H1 (cell line): ENCODE measurements at regions of chr3 and their contacts with region 1.

Region 1: DNA sequence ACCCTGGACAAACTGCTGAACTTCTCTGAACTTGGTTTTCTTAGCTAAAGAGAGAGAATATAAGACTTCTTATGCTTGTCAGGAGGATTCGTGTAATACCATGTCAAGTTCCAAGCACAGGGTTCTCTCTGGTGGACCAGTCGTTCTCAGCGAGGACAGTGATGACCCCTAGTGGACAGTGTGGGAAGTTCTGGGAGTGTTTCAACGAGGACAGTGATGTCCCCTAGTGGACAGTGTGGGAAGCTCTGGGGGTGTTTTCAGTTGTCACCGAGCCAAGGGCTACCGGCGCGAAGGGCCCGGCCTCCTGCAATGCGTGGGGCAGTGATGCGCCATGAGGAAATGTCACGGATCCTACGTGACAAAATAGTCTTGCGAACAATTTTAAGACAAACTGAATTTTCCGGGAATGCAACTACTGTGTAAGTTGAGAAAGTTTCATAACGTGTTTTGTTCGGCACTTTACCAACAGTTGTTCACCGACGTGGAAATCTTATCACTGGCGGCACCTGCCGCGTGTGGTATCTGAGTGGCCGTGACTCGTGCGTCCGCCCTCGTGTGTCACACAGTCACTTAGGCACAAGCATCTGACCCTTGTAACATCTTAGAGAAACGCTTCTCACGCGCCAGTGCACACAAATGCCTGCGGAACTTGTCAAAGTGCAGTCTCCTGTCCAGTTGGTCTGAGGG is 39.3 kb upstream of the MUC4 start:
- DNase-seq: peak; percentile 70 to 92
- H3K4me3 ChIP-seq: no peak overlapping the region
- H3K27ac ChIP-seq: no peak overlapping the region
- H3K4me1 ChIP-seq: no peaks in the 10 kb centered on the region; a peak in 1 of 7 replicates
- H3K27me3 ChIP-seq: no peaks in the 10 kb centered on the region
- CTCF ChIP-seq: peak; percentile 100
- EP300 ChIP-seq: no peak
- POLR2A ChIP-seq: no peak
- RAD21 ChIP-seq: peak; percentile 99 to 100

Region 2: GRCh38 chr3:195748661-195749060 is 102.3 kb before region 1 on chr3:
- CTCF ChIA-PET with region 1: interaction called, 18 read pairs
- POLR2A ChIA-PET with region 1: no interaction called
- DNase-seq: no peak
- H3K4me3 ChIP-seq: no peak overlapping the region
- H3K27ac ChIP-seq: no peak overlapping the region
- H3K4me1 ChIP-seq: no peaks in the 10 kb centered on the region; a peak in 1 of 7 replicates
- H3K27me3 ChIP-seq: peaks cover 0 to 19% (median 16%) of the 10 kb centered on the region in 4 experiments; a peak in 6 of 7 replicates
- CTCF ChIP-seq: no peak
- EP300 ChIP-seq: no peak
- POLR2A ChIP-seq: no peak
- RAD21 ChIP-seq: no peak

Region 3: GRCh38 chr3:195790614-195791300 is 60.2 kb before region 1 on chr3:
- CTCF ChIA-PET with region 1: interaction called, 39 read pairs
- POLR2A ChIA-PET with region 1: no interaction called
- DNase-seq: no peak
- H3K4me3 ChIP-seq: no peak overlapping the region
- H3K27ac ChIP-seq: no peak overlapping the region
- H3K4me1 ChIP-seq: no peaks in the 10 kb centered on the region
- H3K27me3 ChIP-seq: no peaks in the 10 kb centered on the region
- CTCF ChIP-seq: no peak
- EP300 ChIP-seq: no peak
- POLR2A ChIP-seq: no peak
- RAD21 ChIP-seq: no peak

Region 4: GRCh38 chr3:195829897-195830254 is 21.1 kb before region 1 on chr3:
- CTCF ChIA-PET with region 1: interaction called, 18 read pairs
- POLR2A ChIA-PET with region 1: no interaction called
- DNase-seq: no peak
- H3K4me3 ChIP-seq: no peak overlapping the region
- H3K27ac ChIP-seq: no peak overlapping the region
- H3K4me1 ChIP-seq: no peaks in the 10 kb centered on the region; a peak in 2 of 7 replicates
- H3K27me3 ChIP-seq: no peaks in the 10 kb centered on the region
- CTCF ChIP-seq: no peak
- EP300 ChIP-seq: no peak
- POLR2A ChIP-seq: no peak
- RAD21 ChIP-seq: no peak

Region 5: GRCh38 chr3:195876297-195877031 is 25.5 kb after region 1 on chr3:
- CTCF ChIA-PET with region 1: interaction called, 499 read pairs
- POLR2A ChIA-PET with region 1: no interaction called
- DNase-seq: no peak
- H3K4me3 ChIP-seq: no peak overlapping the region
- H3K27ac ChIP-seq: no peak overlapping the region; the same call in 1 of the 2 replicates
- H3K4me1 ChIP-seq: no peaks in the 10 kb centered on the region; a peak in 1 of 7 replicates
- H3K27me3 ChIP-seq: no peaks in the 10 kb centered on the region
- CTCF ChIP-seq: no peak
- EP300 ChIP-seq: no peak
- POLR2A ChIP-seq: no peak
- RAD21 ChIP-seq: no peak